ENCODE measurements at regions of chr16 and their contacts with region 1.

Region 1: GRCh38 chr16:11915644-11916523 is at the start of gene GSPT1:
- DNase-seq: peak; percentile 97
- H3K4me3 ChIP-seq: peak within 1 kb of the TSS; percentile 71 to 96 (median 90)
- H3K4me3 Mint-ChIP-seq: peak within 1 kb of the TSS; percentile 93 to 95
- H3K27ac ChIP-seq: peak within 1 kb of the TSS; percentile 67 to 86
- H3K27ac Mint-ChIP-seq: peak within 1 kb of the TSS; percentile 87 to 95 (median 92)
- H3K4me1 ChIP-seq: peaks cover 16 to 28% of the 10 kb centered on the region in 2 donors
- H3K4me1 Mint-ChIP-seq: peaks cover 28% of the 10 kb centered on the region
- H3K27me3 ChIP-seq: peaks cover 0 to 2% of the 10 kb centered on the region in 2 donors
- H3K27me3 Mint-ChIP-seq: peaks cover 3 to 11% (median 7%) of the 10 kb centered on the region in 3 donors
- CTCF ChIP-seq: no peak
- polyA plus RNA-seq, gene GSPT1: 22.4 to 48.3 (median 47.9) TPM

Region 2: GRCh38 chr16:10944249-10945064 is 971.4 kb before region 1 on chr16 and contains the start of gene CLEC16A:
- intact Hi-C with region 1: loop called in 1 of 2 experiments (anchors 10 kb)
- DNase-seq: peak; percentile 93 to 94 (median 93)
- H3K4me3 ChIP-seq: peak within 1 kb of the TSS; percentile 59 to 94 (median 70)
- H3K4me3 Mint-ChIP-seq: peak within 1 kb of the TSS; percentile 84 to 90
- H3K27ac ChIP-seq: peak within 1 kb of the TSS in 1 of 2 donors; percentile 82
- H3K27ac Mint-ChIP-seq: peak within 1 kb of the TSS in 6 of 7 donors; percentile 13 to 89 (median 78)
- H3K4me1 ChIP-seq: peaks cover 53 to 67% of the 10 kb centered on the region in 2 donors
- H3K4me1 Mint-ChIP-seq: peaks cover 62% of the 10 kb centered on the region
- H3K27me3 ChIP-seq: no peaks in the 10 kb centered on the region
- H3K27me3 Mint-ChIP-seq: peaks cover 3 to 8% (median 4%) of the 10 kb centered on the region in 3 donors
- CTCF ChIP-seq: no peak
- polyA plus RNA-seq, gene CLEC16A: 3.4 to 12.0 (median 5.8) TPM

Region 3: GRCh38 chr16:11851294-11852091 is 64.4 kb before region 1 on chr16 and contains the start of gene RSL1D1:
- intact Hi-C with region 1: loop called (anchors 5 to 10 kb)
- DNase-seq: peak; percentile 90 to 96 (median 96)
- H3K4me3 ChIP-seq: peak within 1 kb of the TSS; percentile 79 to 94 (median 85)
- H3K4me3 Mint-ChIP-seq: peak within 1 kb of the TSS; percentile 95 to 96
- H3K27ac ChIP-seq: peak within 1 kb of the TSS; percentile 81 to 95
- H3K27ac Mint-ChIP-seq: peak within 1 kb of the TSS; percentile 95 to 98 (median 97)
- H3K4me1 ChIP-seq: peaks cover 19 to 26% of the 10 kb centered on the region in 2 donors
- H3K4me1 Mint-ChIP-seq: peaks cover 30% of the 10 kb centered on the region
- H3K27me3 ChIP-seq: no peaks in the 10 kb centered on the region
- H3K27me3 Mint-ChIP-seq: peaks cover 0 to 2% (median 2%) of the 10 kb centered on the region in 3 donors
- CTCF ChIP-seq: no peak
- polyA plus RNA-seq, gene RSL1D1: 46.1 to 182 (median 124) TPM

Region 4: DNA sequence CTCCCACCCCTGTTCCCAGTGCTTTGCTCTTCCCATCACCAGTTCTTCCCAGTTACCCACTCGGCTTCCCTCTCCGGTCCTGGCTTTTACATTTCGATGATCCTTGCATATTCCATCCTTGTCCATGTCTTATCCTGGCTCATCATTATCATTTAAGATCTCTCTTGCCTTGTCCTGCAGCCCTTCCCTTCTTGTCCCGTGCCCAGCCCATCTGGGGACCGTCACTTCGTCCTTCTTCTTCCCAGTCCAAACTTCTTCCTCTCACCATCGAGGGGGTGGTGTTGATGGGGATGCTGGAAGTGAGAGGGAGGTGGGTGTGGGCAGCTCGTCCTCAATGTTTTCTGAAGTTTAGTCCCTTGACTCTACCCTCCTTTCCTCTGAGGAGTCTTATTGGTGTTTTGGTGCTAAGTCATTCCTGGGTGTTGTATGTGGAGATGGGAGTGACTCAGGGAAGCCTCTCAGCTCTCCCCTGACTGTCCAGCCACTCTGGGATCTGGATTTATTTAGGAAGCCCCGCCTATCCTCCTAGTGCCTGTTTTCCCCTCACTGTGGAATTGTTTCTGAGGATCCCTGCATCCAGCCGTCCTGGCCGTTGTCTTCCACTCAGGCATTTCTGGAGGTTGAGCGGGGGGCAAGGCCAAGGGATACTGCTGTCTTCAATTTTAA is 61.6 kb after region 1 on chr16:
- intact Hi-C with region 1: loop called in 1 of 2 experiments (anchors 2 kb)
- DNase-seq: peak in 1 of 3 donors; percentile 36
- H3K4me3 ChIP-seq: peak overlapping the region; percentile 84 to 95 (median 92)
- H3K4me3 Mint-ChIP-seq: peak overlapping the region; percentile 97 to 98
- H3K27ac ChIP-seq: peak overlapping the region in 1 of 2 donors; percentile 93
- H3K27ac Mint-ChIP-seq: peak overlapping the region; percentile 85 to 95 (median 92)
- H3K4me1 ChIP-seq: peaks cover 23 to 27% of the 10 kb centered on the region in 2 donors
- H3K4me1 Mint-ChIP-seq: peaks cover 40% of the 10 kb centered on the region
- H3K27me3 ChIP-seq: no peaks in the 10 kb centered on the region
- H3K27me3 Mint-ChIP-seq: peaks cover 0 to 2% (median 0%) of the 10 kb centered on the region in 3 donors
- CTCF ChIP-seq: no peak

Measured in CD14-positive monocyte (primary cell).